OCI-LY7 (cell line): ENCODE measurements at regions of chr11 and their contacts with region 1.

Region 1: GRCh38 chr11:6431861-6432260 is 8.9 kb downstream of the HPX start:
- DNase-seq: no peak
- H3K4me3 ChIP-seq: no peak overlapping the region
- H3K27ac ChIP-seq: no peak overlapping the region
- H3K4me1 ChIP-seq: peaks cover 71% of the 10 kb centered on the region
- CTCF ChIP-seq: no peak

Region 2: DNA sequence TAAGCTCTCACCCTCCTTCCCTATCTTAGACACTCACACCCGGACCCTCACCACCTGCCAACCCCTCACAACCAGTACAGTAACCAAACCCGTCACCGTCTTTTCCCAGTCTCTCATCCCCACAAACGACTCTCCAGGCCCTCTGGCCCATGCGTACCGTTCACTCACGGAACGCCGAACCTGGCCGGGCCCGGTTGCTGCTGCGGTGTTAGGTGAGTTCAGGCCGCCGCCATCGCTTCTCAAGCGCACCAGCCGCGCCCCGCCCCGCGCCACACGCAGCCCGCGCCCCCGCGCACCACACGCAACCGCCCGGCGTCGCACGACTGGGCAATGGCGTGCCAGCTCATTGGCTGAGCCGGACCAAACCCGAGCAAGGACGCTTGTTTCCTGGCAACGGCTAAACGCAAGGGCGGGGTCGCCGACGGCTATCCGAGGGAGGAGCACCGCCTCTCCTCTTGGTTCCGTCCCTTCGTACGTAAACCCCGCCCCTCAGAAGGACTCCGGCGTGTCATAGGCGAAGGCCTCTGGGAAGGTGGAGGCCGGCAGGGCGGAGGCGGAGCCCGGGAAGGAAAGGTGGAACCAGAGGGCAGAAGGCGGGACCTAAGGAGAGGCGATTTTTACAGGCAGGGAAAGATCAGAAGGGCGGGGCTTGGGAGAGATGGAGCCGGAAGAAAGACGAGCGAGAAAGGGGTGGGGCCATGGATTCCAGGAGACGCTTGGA is 197.3 kb before region 1 on chr11 and contains the start of gene FHIP1B:
- CTCF ChIA-PET with region 1: no interaction called
- POLR2A ChIA-PET with region 1: no interaction called
- intact Hi-C with region 1: loop called (anchors 1 kb)
- DNase-seq: peak; percentile 100
- H3K4me3 ChIP-seq: peak within 1 kb of the TSS; percentile 86
- H3K27ac ChIP-seq: peak within 1 kb of the TSS; percentile 49
- H3K4me1 ChIP-seq: peaks cover 35% of the 10 kb centered on the region
- CTCF ChIP-seq: no peak
- total RNA-seq, gene FHIP1B: 15.7 and 20.1 TPM in 2 replicates

Region 3: GRCh38 chr11:6269994-6270393 is 161.9 kb before region 1 on chr11:
- CTCF ChIA-PET with region 1: no interaction called
- POLR2A ChIA-PET with region 1: no interaction called
- intact Hi-C with region 1: no loop called
- DNase-seq: no peak
- H3K4me3 ChIP-seq: no peak overlapping the region
- H3K27ac ChIP-seq: no peak overlapping the region
- H3K4me1 ChIP-seq: no peaks in the 10 kb centered on the region
- CTCF ChIP-seq: 0 out of 2 replicates have a peak, but pooled peaks have one; percentile 11

Region 4: GRCh38 chr11:6389921-6390724 is 41.7 kb before region 1 on chr11 and contains the start of gene SMPD1:
- CTCF ChIA-PET with region 1: no interaction called
- POLR2A ChIA-PET with region 1: interaction called, 9 read pairs
- intact Hi-C with region 1: loop called (anchors 1 kb)
- DNase-seq: peak; percentile 93
- H3K4me3 ChIP-seq: peak within 1 kb of the TSS; percentile 73
- H3K27ac ChIP-seq: peak within 1 kb of the TSS; percentile 22
- H3K4me1 ChIP-seq: peaks cover 24% of the 10 kb centered on the region
- CTCF ChIP-seq: no peak
- total RNA-seq, gene SMPD1: 5.1 and 5.4 TPM in 2 replicates

Region 5: GRCh38 chr11:6402561-6402981 is 29.3 kb before region 1 on chr11:
- CTCF ChIA-PET with region 1: interaction called, 4 read pairs
- POLR2A ChIA-PET with region 1: interaction called, 15 read pairs
- intact Hi-C with region 1: loop called (anchors 1 kb)
- DNase-seq: peak; percentile 95
- H3K4me3 ChIP-seq: peak overlapping the region; percentile 58
- H3K27ac ChIP-seq: peak overlapping the region; percentile 98
- H3K4me1 ChIP-seq: peaks cover 60% of the 10 kb centered on the region
- CTCF ChIP-seq: no peak

Region 6: GRCh38 chr11:6419009-6419631 is 12.7 kb before region 1 on chr11 and contains the start of gene APBB1:
- CTCF ChIA-PET with region 1: no interaction called
- POLR2A ChIA-PET with region 1: interaction called, 21 read pairs
- intact Hi-C with region 1: no loop called
- DNase-seq: peak; percentile 81
- H3K4me3 ChIP-seq: peak within 1 kb of the TSS; percentile 87
- H3K27ac ChIP-seq: no peak within 1 kb of the TSS
- H3K4me1 ChIP-seq: peaks cover 36% of the 10 kb centered on the region
- CTCF ChIP-seq: no peak
- total RNA-seq, gene APBB1: 30.4 and 36.1 TPM in 2 replicates

Region 7: DNA sequence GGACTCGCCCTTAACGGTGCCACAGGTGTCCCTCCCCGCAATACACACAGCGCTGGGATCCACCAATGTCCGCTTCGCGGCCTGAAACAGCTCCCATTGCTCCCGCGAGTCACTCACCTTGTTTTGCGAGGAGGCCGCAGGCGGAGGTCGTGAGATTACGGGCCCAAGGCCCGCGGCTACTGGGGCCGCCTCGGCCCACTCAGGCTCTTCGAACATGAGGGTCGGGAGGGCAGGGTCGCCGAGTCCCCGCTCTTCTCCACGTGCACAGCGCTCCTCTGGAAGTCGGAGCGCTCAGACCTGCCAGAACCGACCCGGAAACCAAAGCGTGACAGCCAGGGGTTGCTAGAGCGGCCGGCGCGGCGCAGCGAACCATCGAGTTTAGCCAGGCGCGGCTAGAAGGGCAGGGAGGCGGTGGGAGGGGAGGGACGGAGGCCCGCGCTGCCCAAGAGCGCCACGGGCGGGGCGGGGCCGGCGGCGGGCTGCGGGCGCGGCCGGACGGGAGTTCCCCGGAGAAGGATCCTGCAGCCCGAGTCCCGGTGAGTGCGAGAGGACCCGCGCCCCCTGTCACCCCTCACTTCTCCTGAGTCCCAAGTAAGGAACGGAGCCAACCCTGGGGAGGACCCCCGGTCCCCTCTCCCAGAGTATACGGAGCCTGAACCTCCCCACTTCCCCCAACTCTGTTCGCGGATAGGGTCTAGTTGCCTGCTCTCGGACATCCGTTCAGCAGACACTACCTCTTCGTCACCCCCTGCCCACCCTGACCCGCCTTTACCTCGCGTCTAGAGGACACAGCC is 171.6 kb after region 1 on chr11 and contains the starts of genes ILK and RRP8:
- CTCF ChIA-PET with region 1: no interaction called
- POLR2A ChIA-PET with region 1: no interaction called
- intact Hi-C with region 1: no loop called
- DNase-seq: peak; percentile 90
- H3K4me3 ChIP-seq: peak within 1 kb of the TSS; percentile 91
- H3K27ac ChIP-seq: peak within 1 kb of the TSS; percentile 67
- H3K4me1 ChIP-seq: peaks cover 47% of the 10 kb centered on the region
- CTCF ChIP-seq: 0 out of 2 replicates have a peak, but pooled peaks have one; percentile 18
- total RNA-seq, gene ILK: 52.0 and 64.8 TPM in 2 replicates
- total RNA-seq, gene RRP8: 26.4 and 29.4 TPM in 2 replicates